G401 (cell line): ENCODE measurements at regions of chr7 and their contacts with region 1.

Region 1: DNA sequence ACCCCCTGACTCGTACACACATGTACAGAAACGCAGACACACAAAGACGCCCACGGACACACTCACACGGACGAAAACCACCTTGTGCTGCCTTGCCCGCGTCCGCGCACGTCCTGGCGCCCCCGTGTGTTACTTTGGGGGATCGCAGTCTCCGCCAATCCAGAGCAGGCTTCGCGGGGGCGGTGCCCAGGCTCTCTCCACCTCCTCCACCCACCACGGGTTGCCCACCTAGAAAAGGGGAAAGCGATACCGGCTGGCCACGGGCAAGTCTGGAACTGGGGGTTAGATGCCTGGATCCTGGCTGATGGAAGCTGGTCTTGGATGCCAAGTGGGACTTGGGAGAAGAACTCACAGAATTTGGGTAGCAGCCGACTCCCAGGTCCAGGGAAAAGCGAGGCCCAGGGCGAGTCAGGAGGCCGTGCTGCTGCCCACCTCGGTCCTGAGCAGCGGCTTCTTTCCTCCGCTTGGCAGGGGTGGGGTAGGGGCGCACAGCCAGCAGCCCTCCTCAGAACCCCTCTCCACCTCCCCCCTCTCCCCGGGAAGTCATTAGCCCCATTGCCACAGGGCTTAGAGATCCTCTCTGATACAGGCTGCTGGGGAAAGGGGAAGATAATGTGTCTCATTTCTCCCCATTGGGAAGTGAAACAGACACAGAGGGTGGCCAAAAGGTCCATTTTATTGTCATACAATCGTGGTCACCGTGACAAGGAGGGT is 4.6 kb upstream of the VGF start:
- DNase-seq: peak; percentile 63

Region 2: DNA sequence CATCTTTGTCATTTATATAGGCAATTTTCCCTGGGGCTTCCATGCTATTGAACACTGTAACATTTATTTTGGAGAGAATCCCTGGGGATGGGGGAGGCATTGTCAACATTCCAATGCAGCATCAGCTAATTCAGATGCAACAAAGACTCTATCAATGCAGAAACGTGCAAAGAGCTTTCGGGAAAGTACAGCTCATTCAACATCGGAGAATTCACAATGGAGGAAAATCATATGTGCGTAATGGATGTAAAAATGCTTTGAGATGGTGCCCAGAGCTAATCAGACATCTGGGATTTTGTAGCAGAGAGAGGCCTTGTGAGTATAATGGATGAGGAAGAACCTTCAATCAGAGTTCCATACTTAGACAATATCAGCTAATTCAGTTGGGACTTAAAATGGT is 103.2 kb after region 1 on chr7:
- in situ Hi-C with region 1: loop called (anchors 10 kb)
- DNase-seq: no peak

Region 3: GRCh38 chr7:101486433-101487104 is 316.6 kb after region 1 on chr7:
- in situ Hi-C with region 1: no loop called
- DNase-seq: no peak